ENCODE measurements at regions of chr1 and their contacts with region 1.

Region 1: GRCh38 chr1:234528074-234528865 is 49.3 kb upstream of the TARBP1 start:
- DNase-seq: no peak
- H3K4me3 ChIP-seq: no peak overlapping the region
- H3K27ac ChIP-seq: no peak overlapping the region
- H3K4me1 ChIP-seq: peaks cover 44% of the 10 kb centered on the region
- CTCF ChIP-seq: no peak

Region 2: DNA sequence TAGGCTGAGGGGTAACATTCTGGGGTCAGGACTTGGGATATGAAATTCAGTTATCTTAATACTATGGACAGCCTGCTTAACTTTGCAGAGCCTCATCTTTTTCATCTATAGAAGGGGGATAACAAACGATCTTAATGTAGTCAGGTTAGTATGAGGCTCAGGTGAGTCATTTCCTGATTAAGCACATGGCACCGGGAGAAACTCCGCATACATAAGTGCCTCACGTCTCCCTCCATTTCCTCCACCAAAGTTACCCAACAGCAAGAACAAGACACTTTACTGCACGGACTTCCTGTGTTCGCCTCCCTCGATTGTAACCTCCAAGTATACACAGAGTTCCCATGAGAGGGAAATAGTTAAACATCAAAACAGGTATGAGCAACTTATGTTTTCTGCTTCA is 267.7 kb before region 1 on chr1:
- CTCF ChIA-PET with region 1: no interaction called
- POLR2A ChIA-PET with region 1: no interaction called
- intact Hi-C with region 1: no loop called
- DNase-seq: no peak
- H3K4me3 ChIP-seq: no peak overlapping the region
- H3K27ac ChIP-seq: no peak overlapping the region
- H3K4me1 ChIP-seq: no peaks in the 10 kb centered on the region
- CTCF ChIP-seq: no peak

Region 3: GRCh38 chr1:234509452-234510328 is 18.6 kb before region 1 on chr1:
- CTCF ChIA-PET with region 1: interaction called, 4 read pairs
- POLR2A ChIA-PET with region 1: interaction called, 11 read pairs
- intact Hi-C with region 1: no loop called
- DNase-seq: no peak
- H3K4me3 ChIP-seq: no peak overlapping the region
- H3K27ac ChIP-seq: no peak overlapping the region
- H3K4me1 ChIP-seq: peaks cover 9% of the 10 kb centered on the region
- CTCF ChIP-seq: no peak

Region 4: GRCh38 chr1:234515821-234516241 is 12.4 kb before region 1 on chr1:
- CTCF ChIA-PET with region 1: interaction called, 4 read pairs
- POLR2A ChIA-PET with region 1: interaction called, 11 read pairs
- intact Hi-C with region 1: no loop called
- DNase-seq: no peak
- H3K4me3 ChIP-seq: no peak overlapping the region
- H3K27ac ChIP-seq: no peak overlapping the region
- H3K4me1 ChIP-seq: peaks cover 51% of the 10 kb centered on the region
- CTCF ChIP-seq: no peak

Region 5: DNA sequence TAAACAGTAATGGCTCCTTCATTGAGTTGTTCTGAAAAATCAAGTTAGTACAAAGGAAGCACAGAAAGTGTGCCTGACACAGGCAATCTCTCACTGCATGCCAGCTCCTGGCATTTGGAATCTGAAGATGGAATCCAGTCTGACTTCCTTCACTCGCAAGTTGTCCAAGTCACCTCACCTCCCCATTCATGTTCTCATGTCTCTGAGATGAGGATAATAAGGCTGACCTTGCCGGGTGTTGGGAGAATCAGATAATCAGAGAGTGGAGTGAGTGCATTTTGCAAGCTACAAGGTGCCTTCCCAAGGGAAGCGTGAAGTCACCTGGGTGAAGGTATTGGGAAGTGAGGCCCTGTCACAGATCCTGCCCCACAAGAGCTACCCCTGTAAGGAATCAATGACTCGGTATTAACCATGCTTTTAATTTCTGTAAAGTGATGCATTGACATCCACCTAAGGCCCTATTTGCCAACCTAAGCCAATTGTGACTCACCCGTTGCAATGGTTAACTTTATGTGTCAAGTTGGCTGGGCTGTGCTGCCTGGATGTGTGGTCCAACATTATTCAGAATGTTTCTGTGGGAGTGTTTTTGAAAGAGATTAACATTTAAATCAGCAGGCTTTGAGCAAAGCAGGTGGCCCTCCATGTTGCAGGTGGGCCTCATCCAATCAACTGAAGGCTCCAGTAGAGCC is 13.2 kb after region 1 on chr1:
- CTCF ChIA-PET with region 1: interaction called, 3 read pairs
- POLR2A ChIA-PET with region 1: interaction called, 17 read pairs
- intact Hi-C with region 1: no loop called
- DNase-seq: no peak
- H3K4me3 ChIP-seq: no peak overlapping the region
- H3K27ac ChIP-seq: no peak overlapping the region
- H3K4me1 ChIP-seq: no peaks in the 10 kb centered on the region
- CTCF ChIP-seq: no peak

Region 6: GRCh38 chr1:234621657-234622335 is 93.5 kb after region 1 on chr1:
- CTCF ChIA-PET with region 1: no interaction called
- POLR2A ChIA-PET with region 1: no interaction called
- intact Hi-C with region 1: no loop called
- DNase-seq: no peak
- H3K4me3 ChIP-seq: no peak overlapping the region
- H3K27ac ChIP-seq: no peak overlapping the region
- H3K4me1 ChIP-seq: peaks cover 18% of the 10 kb centered on the region
- CTCF ChIP-seq: no peak

Measured in OCI-LY7 (cell line).